ENCODE measurements at regions of chr12 and their contacts with region 1.

Region 1: GRCh38 chr12:54701940-54702592 is 53.9 kb upstream of the DCD start:
- DNase-seq: peak; percentile 37
- ATAC-seq: peak; percentile 78
- H3K4me3 ChIP-seq: no peak overlapping the region
- H3K27ac ChIP-seq: no peak overlapping the region
- H3K4me1 ChIP-seq: no peaks in the 10 kb centered on the region
- H3K27me3 ChIP-seq: peaks cover 36% of the 10 kb centered on the region
- CTCF ChIP-seq: peak; percentile 51 to 66 (median 61); a peak in 5 of 6 replicates
- POLR2A ChIP-seq: no peak
- RAD21 ChIP-seq: peak; percentile 71

Region 2: GRCh38 chr12:54579696-54580333 is 122.3 kb before region 1 on chr12:
- CTCF ChIA-PET with region 1: interaction called, 16 read pairs
- POLR2A ChIA-PET with region 1: no interaction called
- RAD21 ChIA-PET with region 1: no interaction called
- intact Hi-C with region 1: no loop called
- DNase-seq: peak; percentile 55
- ATAC-seq: peak; percentile 99
- H3K4me3 ChIP-seq: no peak overlapping the region; a peak in 1 of 4 replicates
- H3K27ac ChIP-seq: no peak overlapping the region
- H3K4me1 ChIP-seq: peaks cover 0 to 10% of the 10 kb centered on the region in 2 experiments; a peak in 2 of 4 replicates
- H3K27me3 ChIP-seq: peaks cover 14% of the 10 kb centered on the region; the same call in 1 of the 2 replicates
- CTCF ChIP-seq: peak; percentile 72 to 100 (median 98)
- POLR2A ChIP-seq: no peak
- RAD21 ChIP-seq: peak; percentile 82

Region 3: DNA sequence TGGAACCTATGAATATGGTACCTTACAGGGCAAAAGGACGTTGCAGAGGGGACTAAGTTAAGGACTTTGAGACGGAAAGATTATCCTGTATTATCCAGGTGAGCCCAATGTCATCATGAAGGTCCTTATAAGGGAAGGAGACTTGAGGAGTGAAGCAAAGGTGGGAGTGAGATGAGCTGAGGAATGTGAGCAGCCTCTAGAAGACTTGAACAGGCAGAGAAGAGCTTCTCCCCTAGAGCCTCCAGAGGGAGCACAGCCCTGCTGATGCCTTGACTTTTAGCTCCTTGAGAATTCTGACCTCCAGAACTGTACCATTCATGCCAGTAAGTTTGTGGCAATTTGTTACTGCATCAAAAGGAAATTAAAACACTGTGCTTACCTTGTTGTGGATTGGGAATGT is 12.1 kb before region 1 on chr12:
- CTCF ChIA-PET with region 1: interaction called, 19 read pairs
- POLR2A ChIA-PET with region 1: no interaction called
- RAD21 ChIA-PET with region 1: no interaction called
- intact Hi-C with region 1: no loop called
- DNase-seq: peak; percentile 26
- ATAC-seq: peak; percentile 94
- H3K4me3 ChIP-seq: no peak overlapping the region
- H3K27ac ChIP-seq: no peak overlapping the region
- H3K4me1 ChIP-seq: no peaks in the 10 kb centered on the region
- H3K27me3 ChIP-seq: peaks cover 63% of the 10 kb centered on the region
- CTCF ChIP-seq: peak in 2 of 3 experiments; percentile 46 to 63; a peak in 4 of 6 replicates
- POLR2A ChIP-seq: no peak
- RAD21 ChIP-seq: no peak

Region 4: GRCh38 chr12:54749191-54749818 is 47.2 kb after region 1 on chr12:
- CTCF ChIA-PET with region 1: interaction called, 21 read pairs
- POLR2A ChIA-PET with region 1: no interaction called
- RAD21 ChIA-PET with region 1: interaction called in 1 of 2 experiments, 3 read pairs
- intact Hi-C with region 1: loop called (anchors 5 kb)
- DNase-seq: peak; percentile 37
- ATAC-seq: peak; percentile 81
- H3K4me3 ChIP-seq: no peak overlapping the region
- H3K27ac ChIP-seq: no peak overlapping the region
- H3K4me1 ChIP-seq: no peaks in the 10 kb centered on the region
- H3K27me3 ChIP-seq: peaks cover 42% of the 10 kb centered on the region
- CTCF ChIP-seq: peak; percentile 76 to 87 (median 83)
- POLR2A ChIP-seq: no peak
- RAD21 ChIP-seq: peak; percentile 77

Region 5: DNA sequence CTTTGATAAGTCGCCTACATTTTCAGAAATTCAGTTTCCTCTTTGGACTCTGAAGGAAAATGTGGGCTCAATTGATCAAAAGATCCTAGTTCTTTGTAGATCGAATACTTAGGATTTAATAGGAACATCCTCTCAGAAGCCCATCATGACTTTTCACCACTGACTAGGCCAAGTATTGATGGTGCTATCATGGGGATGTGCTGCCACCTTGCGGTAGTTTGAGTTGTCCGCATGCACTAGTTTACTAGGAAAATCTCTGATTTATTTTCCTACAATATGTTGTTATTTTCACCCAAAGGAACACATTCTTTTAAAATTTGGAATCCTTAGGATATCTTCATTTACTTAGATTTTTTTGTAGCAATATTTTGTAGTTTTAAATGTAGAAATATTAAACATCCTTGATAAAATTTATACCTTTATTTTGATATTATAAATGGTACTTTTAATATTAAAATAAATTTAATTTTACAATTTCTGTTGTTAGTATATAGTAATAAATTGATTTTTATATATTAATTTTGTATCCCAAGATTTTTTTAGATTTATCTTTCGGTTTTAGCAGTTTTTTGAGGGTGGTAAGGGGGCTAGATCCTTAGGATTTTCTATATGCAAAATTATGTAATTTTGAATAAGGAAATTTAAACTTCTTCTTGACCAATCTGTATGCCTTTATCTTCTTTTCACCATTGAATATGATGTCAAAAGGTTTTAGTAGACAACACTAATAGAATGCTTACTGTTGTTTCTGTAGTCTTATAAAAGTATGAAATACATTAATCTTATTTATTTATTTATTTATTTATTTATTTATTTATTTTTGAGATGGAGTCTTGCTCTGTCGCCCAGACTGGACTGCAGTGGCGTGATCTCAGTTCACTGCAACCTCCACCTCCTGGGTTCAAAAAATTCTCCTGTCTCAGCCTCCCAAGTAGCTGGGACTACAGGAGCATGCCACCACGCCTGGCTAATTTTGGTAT is 371.3 kb after region 1 on chr12:
- CTCF ChIA-PET with region 1: interaction called, 24 read pairs
- POLR2A ChIA-PET with region 1: no interaction called
- RAD21 ChIA-PET with region 1: interaction called in 1 of 2 experiments, 3 read pairs
- intact Hi-C with region 1: loop called (anchors 5 kb)
- DNase-seq: peak; percentile 66
- ATAC-seq: 0 out of 2 replicates have a peak, but pooled peaks have one; percentile 35
- H3K4me3 ChIP-seq: no peak overlapping the region
- H3K27ac ChIP-seq: no peak overlapping the region
- H3K4me1 ChIP-seq: no peaks in the 10 kb centered on the region
- H3K27me3 ChIP-seq: peaks cover 17% of the 10 kb centered on the region
- CTCF ChIP-seq: peak; percentile 71 to 87 (median 79)
- POLR2A ChIP-seq: no peak
- RAD21 ChIP-seq: peak; percentile 84